CD14-positive monocyte (primary cell): ENCODE measurements at regions of chr7 and their contacts with region 1.

Region 1: DNA sequence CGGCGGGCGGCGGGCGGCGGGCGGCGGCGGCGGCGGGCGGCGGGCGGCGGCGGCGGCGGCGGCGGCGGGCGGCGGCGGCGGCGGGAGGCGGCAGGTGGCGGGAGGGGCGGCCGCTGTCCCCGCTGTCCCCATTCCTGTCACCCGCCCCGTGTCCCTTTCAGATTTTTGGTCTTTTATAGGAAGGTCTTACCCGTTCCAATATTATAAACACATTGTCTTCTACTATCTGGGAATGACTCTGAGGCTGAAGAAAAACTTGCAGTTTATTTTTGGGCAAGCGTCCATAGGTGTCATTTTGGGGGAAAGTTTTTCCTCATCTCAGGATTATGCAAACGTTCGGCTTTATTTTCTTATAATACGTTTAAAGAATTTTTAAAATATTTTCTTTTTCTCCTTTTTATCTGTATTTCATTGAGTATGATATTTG is 578 bp downstream of the ZNF713 start:
- DNase-seq: no peak
- H3K4me3 ChIP-seq: peak overlapping the region; percentile 44 to 79 (median 67)
- H3K4me3 Mint-ChIP-seq: peak overlapping the region; percentile 76 to 82
- H3K27ac ChIP-seq: no peak overlapping the region
- H3K27ac Mint-ChIP-seq: peak overlapping the region in 6 of 7 donors; percentile 40 to 88 (median 68)
- H3K4me1 ChIP-seq: peaks cover 9 to 10% of the 10 kb centered on the region in 2 donors
- H3K4me1 Mint-ChIP-seq: peaks cover 8% of the 10 kb centered on the region
- H3K27me3 ChIP-seq: no peaks in the 10 kb centered on the region
- H3K27me3 Mint-ChIP-seq: peaks cover 1 to 5% (median 5%) of the 10 kb centered on the region in 3 donors
- CTCF ChIP-seq: no peak

Region 2: DNA sequence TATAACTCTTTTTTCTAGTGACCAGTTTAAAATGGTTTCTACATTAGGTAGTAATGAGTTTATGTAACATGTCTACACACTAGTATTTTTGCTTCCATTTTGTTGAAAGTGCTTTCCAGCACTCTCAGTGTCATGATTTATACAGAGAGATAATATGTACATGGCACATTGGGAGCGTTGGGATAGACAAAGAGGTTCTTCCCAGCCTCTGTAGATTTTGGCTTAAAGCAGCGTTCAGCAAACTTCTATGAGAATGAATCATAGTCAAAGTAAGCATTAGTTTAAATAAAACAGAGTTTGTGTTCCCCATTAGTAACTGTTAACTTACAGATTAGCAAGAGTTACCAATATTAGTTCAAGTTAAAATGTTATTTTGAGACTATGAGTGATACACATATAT is 69.1 kb before region 1 on chr7:
- intact Hi-C with region 1: no loop called
- DNase-seq: no peak
- H3K4me3 ChIP-seq: no peak overlapping the region
- H3K4me3 Mint-ChIP-seq: no peak overlapping the region
- H3K27ac ChIP-seq: no peak overlapping the region
- H3K27ac Mint-ChIP-seq: no peak overlapping the region
- H3K4me1 ChIP-seq: no peaks in the 10 kb centered on the region
- H3K4me1 Mint-ChIP-seq: no peaks in the 10 kb centered on the region
- H3K27me3 ChIP-seq: no peaks in the 10 kb centered on the region
- H3K27me3 Mint-ChIP-seq: peaks cover 0 to 1% (median 0%) of the 10 kb centered on the region in 3 donors
- CTCF ChIP-seq: no peak

Region 3: DNA sequence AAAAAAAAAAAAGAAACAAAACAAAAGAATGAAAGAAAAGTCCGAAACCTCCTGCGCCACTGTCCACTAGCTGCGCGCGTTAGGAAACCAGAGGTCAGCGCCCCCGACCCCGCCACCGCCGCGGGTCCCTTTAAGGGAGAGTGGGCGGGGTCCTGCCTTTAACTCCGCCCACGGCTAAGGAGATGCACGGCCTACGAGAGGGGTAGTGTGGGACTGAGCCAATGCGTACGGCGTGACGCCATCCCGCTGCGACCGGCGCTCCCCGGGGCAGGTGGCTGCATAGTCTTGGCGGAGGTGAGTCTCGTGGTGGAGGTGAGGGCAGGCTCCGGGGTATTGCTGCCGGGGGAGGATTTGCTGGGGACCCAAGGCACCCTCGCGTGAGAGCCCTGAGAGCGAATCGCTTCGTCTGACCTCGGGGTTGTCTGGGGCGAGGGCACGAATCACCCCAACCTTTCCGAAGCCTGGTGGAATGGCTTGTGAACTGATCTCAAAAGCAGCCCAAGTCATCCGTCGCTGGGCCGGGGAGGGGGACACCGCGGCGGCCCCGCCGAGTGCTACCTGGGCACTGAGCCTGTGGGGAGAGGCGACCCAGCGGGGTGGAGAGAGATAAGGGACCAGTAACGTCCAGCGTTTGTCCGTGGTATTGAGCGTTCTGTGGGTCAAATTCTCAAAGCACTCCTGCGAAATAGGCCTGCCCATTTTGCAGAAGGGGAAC is 64.0 kb after region 1 on chr7 and contains the start of gene MRPS17:
- intact Hi-C with region 1: loop called (anchors 5 kb)
- DNase-seq: peak; percentile 80 to 83 (median 81)
- H3K4me3 ChIP-seq: peak within 1 kb of the TSS; percentile 58 to 77 (median 61)
- H3K4me3 Mint-ChIP-seq: peak within 1 kb of the TSS; percentile 94 to 98
- H3K27ac ChIP-seq: peak within 1 kb of the TSS; percentile 68 to 83
- H3K27ac Mint-ChIP-seq: peak within 1 kb of the TSS; percentile 93 to 98 (median 94)
- H3K4me1 ChIP-seq: peaks cover 7 to 11% of the 10 kb centered on the region in 2 donors
- H3K4me1 Mint-ChIP-seq: peaks cover 13% of the 10 kb centered on the region
- H3K27me3 ChIP-seq: no peaks in the 10 kb centered on the region
- H3K27me3 Mint-ChIP-seq: peaks cover 0 to 3% (median 0%) of the 10 kb centered on the region in 3 donors
- CTCF ChIP-seq: no peak
- polyA plus RNA-seq, gene MRPS17: 6.1 to 14.6 (median 10.9) TPM